Calu3 (cell line): ENCODE measurements at regions of chr11 and their contacts with region 1.

Region 1: DNA sequence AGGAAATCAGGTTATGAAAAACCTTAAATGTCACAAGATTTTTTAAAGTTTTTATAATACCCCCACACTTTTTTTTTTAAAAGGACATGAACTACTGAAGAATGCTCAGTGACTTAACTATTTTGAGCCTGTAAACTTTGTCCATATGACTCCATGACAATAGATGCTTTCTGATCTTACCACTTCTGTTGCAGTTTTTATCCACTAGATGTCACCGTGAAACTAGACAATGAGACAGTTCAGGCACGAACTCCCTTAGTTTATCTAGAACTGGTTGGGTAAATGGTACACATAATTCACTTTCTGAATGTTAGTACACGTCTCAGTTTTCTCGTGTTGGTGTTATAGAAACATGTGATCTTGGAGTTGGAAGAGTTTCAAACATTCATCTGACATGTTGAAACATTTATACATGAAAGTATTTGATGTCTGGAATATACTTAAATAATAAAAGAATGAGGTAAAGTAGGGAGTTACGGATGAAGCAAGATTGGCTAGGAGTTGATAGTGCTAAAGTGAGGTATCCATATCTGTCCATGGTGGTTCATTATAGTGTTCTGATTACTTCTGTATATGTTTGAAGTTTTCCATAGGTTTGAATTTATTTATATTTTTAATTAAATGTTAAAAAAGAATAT is 8.1 kb downstream of the CCDC15 start:
- DNase-seq: peak; percentile 11
- H3K4me3 Mint-ChIP-seq: no peak overlapping the region
- H3K27ac Mint-ChIP-seq: no peak overlapping the region
- H3K4me1 Mint-ChIP-seq: no peaks in the 10 kb centered on the region
- H3K27me3 Mint-ChIP-seq: no peaks in the 10 kb centered on the region
- CTCF ChIP-seq: no peak

Region 2: DNA sequence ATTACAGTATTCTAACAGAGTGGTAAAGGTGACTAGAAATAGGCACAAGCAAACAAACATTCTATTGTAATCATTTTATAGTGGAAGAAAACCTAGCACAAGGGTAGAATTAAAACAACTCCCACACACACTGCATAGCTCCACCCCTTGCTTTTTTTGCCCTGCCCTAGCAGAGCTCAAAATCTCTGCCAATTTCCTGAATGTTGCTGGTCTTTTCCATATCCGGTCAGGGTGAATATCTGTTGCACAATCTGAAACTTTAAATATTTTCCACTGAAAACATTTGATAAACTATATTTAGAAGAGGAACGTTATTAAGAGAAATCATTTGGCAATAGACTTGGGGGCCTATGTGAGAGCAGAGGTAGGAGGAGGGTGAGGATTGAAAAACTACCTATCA is 285.7 kb before region 1 on chr11:
- CTCF ChIA-PET with region 1: no interaction called
- intact Hi-C with region 1: no loop called
- DNase-seq: no peak
- H3K4me3 Mint-ChIP-seq: no peak overlapping the region
- H3K27ac Mint-ChIP-seq: no peak overlapping the region
- H3K4me1 Mint-ChIP-seq: no peaks in the 10 kb centered on the region
- H3K27me3 Mint-ChIP-seq: no peaks in the 10 kb centered on the region
- CTCF ChIP-seq: no peak

Region 3: DNA sequence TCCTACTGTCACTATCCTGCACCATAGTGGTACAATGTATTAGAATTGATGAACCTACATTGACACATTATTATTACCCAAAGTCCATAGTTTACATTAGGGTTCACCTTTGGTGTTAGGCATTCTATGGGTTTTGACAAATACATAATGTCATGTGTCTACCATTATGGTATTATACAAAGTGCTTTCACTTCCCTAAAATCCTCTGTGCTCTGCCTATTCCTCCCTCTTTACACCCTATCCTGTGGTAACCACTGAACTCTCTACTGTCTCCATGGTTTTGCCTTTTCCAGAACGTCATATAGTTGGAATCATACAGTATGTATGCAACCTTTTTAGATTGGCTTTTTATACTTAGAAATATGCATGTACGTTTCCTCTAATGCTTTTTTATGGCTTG is 43.4 kb after region 1 on chr11:
- CTCF ChIA-PET with region 1: no interaction called
- intact Hi-C with region 1: no loop called
- DNase-seq: no peak
- H3K4me3 Mint-ChIP-seq: no peak overlapping the region
- H3K27ac Mint-ChIP-seq: no peak overlapping the region
- H3K4me1 Mint-ChIP-seq: no peaks in the 10 kb centered on the region
- H3K27me3 Mint-ChIP-seq: no peaks in the 10 kb centered on the region
- CTCF ChIP-seq: no peak

Region 4: GRCh38 chr11:125070699-125071254 is 108.7 kb after region 1 on chr11:
- CTCF ChIA-PET with region 1: no interaction called
- intact Hi-C with region 1: no loop called
- DNase-seq: peak; percentile 47
- H3K4me3 Mint-ChIP-seq: no peak overlapping the region
- H3K27ac Mint-ChIP-seq: peak overlapping the region; percentile 66
- H3K4me1 Mint-ChIP-seq: peaks cover 26% of the 10 kb centered on the region
- H3K27me3 Mint-ChIP-seq: no peaks in the 10 kb centered on the region
- CTCF ChIP-seq: no peak

Region 5: GRCh38 chr11:125429166-125429707 is 467.1 kb after region 1 on chr11:
- CTCF ChIA-PET with region 1: no interaction called
- intact Hi-C with region 1: loop called (anchors 5 kb)
- DNase-seq: peak; percentile 61
- H3K4me3 Mint-ChIP-seq: no peak overlapping the region
- H3K27ac Mint-ChIP-seq: no peak overlapping the region
- H3K4me1 Mint-ChIP-seq: no peaks in the 10 kb centered on the region
- H3K27me3 Mint-ChIP-seq: peaks cover 42% of the 10 kb centered on the region
- CTCF ChIP-seq: peak; percentile 38